OCI-LY7 (cell line): ENCODE measurements at regions of chr9 and their contacts with region 1.

Region 1: GRCh38 chr9:112486221-112487007 is at the start of gene KIAA1958:
- DNase-seq: peak; percentile 93
- H3K4me3 ChIP-seq: peak within 1 kb of the TSS; percentile 84
- H3K27ac ChIP-seq: peak within 1 kb of the TSS; percentile 66
- H3K4me1 ChIP-seq: peaks cover 27% of the 10 kb centered on the region
- CTCF ChIP-seq: no peak
- total RNA-seq, gene KIAA1958: 13.4 and 15.4 TPM in 2 replicates

Region 2: GRCh38 chr9:112379177-112380101 is 107.0 kb before region 1 on chr9:
- CTCF ChIA-PET with region 1: no interaction called
- POLR2A ChIA-PET with region 1: interaction called, 4 read pairs
- intact Hi-C with region 1: loop called (anchors 2 kb)
- DNase-seq: peak; percentile 97
- H3K4me3 ChIP-seq: peak overlapping the region; percentile 90
- H3K27ac ChIP-seq: peak overlapping the region; percentile 51
- H3K4me1 ChIP-seq: peaks cover 42% of the 10 kb centered on the region
- CTCF ChIP-seq: no peak

Region 3: GRCh38 chr9:112750111-112750767 is 263.8 kb after region 1 on chr9 and contains the start of gene SNX30:
- CTCF ChIA-PET with region 1: no interaction called
- POLR2A ChIA-PET with region 1: no interaction called
- intact Hi-C with region 1: loop called (anchors 1 kb)
- DNase-seq: peak; percentile 86
- H3K4me3 ChIP-seq: peak within 1 kb of the TSS; percentile 99
- H3K27ac ChIP-seq: peak within 1 kb of the TSS; percentile 29
- H3K4me1 ChIP-seq: peaks cover 35% of the 10 kb centered on the region
- CTCF ChIP-seq: no peak
- total RNA-seq, gene SNX30: 14.2 and 19.8 TPM in 2 replicates

Region 4: GRCh38 chr9:112809351-112809848 is 323.0 kb after region 1 on chr9:
- CTCF ChIA-PET with region 1: no interaction called
- POLR2A ChIA-PET with region 1: no interaction called
- intact Hi-C with region 1: no loop called
- DNase-seq: peak; percentile 85
- H3K4me3 ChIP-seq: peak overlapping the region; percentile 34
- H3K27ac ChIP-seq: peak overlapping the region; percentile 65
- H3K4me1 ChIP-seq: peaks cover 35% of the 10 kb centered on the region
- CTCF ChIP-seq: no peak

Region 5: GRCh38 chr9:112819635-112820496 is 333.5 kb after region 1 on chr9:
- CTCF ChIA-PET with region 1: no interaction called
- POLR2A ChIA-PET with region 1: no interaction called
- intact Hi-C with region 1: loop called (anchors 10 kb)
- DNase-seq: peak; percentile 61
- H3K4me3 ChIP-seq: no peak overlapping the region
- H3K27ac ChIP-seq: no peak overlapping the region
- H3K4me1 ChIP-seq: peaks cover 3% of the 10 kb centered on the region
- CTCF ChIP-seq: peak; percentile 94